Naive thymus-derived CD4-positive, alpha-beta T cell (primary cell): ENCODE measurements at regions of chr6 and their contacts with region 1.

Region 1: GRCh38 chr6:119349323-119350042 is at the start of gene MAN1A1:
- DNase-seq: peak; percentile 79 to 96 (median 90)
- ATAC-seq: peak; percentile 94
- H3K4me3 ChIP-seq: peak within 1 kb of the TSS; percentile 85
- H3K4me3 Mint-ChIP-seq: peak within 1 kb of the TSS; percentile 82 to 99 (median 93)
- H3K27ac ChIP-seq: peak within 1 kb of the TSS; percentile 83
- H3K27ac Mint-ChIP-seq: peak within 1 kb of the TSS; percentile 77 to 96 (median 83)
- H3K4me1 ChIP-seq: peaks cover 9% of the 10 kb centered on the region in 2 donors
- H3K4me1 Mint-ChIP-seq: peaks cover 8 to 60% (median 53%) of the 10 kb centered on the region in 7 donors
- H3K27me3 ChIP-seq: no peaks in the 10 kb centered on the region
- H3K27me3 Mint-ChIP-seq: no peaks in the 10 kb centered on the region
- total RNA-seq, gene MAN1A1: 8.3 to 22.3 (median 8.5) TPM

Region 2: DNA sequence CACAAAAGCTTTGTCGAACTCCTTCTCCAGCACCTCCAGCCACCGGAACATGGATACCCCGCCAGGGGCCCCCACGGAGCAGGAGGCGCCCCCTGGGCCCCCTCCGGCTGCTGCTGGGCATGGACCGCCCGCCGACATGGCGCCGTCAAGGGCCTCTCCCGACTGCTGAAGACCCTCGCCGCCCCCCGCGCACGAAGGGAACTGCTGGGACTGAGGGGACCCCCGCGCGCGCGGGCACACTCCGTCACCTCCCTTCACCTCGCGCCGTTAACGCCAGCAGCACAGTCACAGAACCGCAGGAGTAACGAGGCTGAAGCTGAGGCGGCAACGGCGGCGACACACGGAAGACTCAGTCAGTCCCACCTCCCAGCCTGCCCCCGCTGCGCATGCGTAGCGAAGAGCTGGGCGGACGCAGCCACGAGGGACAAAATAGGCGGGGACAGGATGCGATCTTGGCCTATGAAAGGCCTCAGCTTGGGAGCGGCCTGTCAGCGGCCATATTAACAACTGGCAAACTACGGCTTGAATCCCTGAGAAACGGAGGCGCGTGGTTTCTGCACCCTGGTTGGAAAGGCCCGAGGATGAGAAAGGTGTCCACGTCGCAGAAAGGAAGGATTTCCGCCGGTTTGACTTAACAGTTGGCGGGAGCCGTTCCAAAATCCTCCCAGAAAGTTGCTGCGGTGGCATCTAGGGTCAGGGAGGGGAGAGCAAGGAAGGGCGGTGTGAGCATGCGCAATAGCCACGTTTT is 1747.2 kb before region 1 on chr6 and contains the start of gene GOPC:
- CTCF ChIA-PET with region 1: no interaction called
- POLR2A ChIA-PET with region 1: no interaction called
- intact Hi-C with region 1: loop called in 1 of 2 experiments (anchors 1 kb)
- DNase-seq: peak; percentile 87 to 97 (median 96)
- ATAC-seq: peak; percentile 97
- H3K4me3 ChIP-seq: peak within 1 kb of the TSS; percentile 93
- H3K4me3 Mint-ChIP-seq: peak within 1 kb of the TSS; percentile 96 to 100 (median 99)
- H3K27ac ChIP-seq: peak within 1 kb of the TSS; percentile 92
- H3K27ac Mint-ChIP-seq: peak within 1 kb of the TSS; percentile 94 to 99 (median 99)
- H3K4me1 ChIP-seq: peaks cover 0 to 9% of the 10 kb centered on the region in 2 donors
- H3K4me1 Mint-ChIP-seq: peaks cover 24 to 58% (median 49%) of the 10 kb centered on the region in 7 donors
- H3K27me3 ChIP-seq: no peaks in the 10 kb centered on the region
- H3K27me3 Mint-ChIP-seq: peaks cover 0 to 5% (median 4%) of the 10 kb centered on the region in 5 donors
- total RNA-seq, gene GOPC: 16.2 to 39.4 (median 26.5) TPM

Region 3: GRCh38 chr6:118709859-118710350 is 639.6 kb before region 1 on chr6:
- CTCF ChIA-PET with region 1: no interaction called
- POLR2A ChIA-PET with region 1: no interaction called
- intact Hi-C with region 1: loop called (anchors 5 kb)
- DNase-seq: peak; percentile 25 to 87 (median 83)
- ATAC-seq: peak; percentile 93
- H3K4me3 ChIP-seq: peak overlapping the region; percentile 91
- H3K4me3 Mint-ChIP-seq: peak overlapping the region; percentile 95 to 100 (median 97)
- H3K27ac ChIP-seq: peak overlapping the region; percentile 76
- H3K27ac Mint-ChIP-seq: peak overlapping the region; percentile 94 to 99 (median 97)
- H3K4me1 ChIP-seq: peaks cover 48 to 49% of the 10 kb centered on the region in 2 donors
- H3K4me1 Mint-ChIP-seq: peaks cover 47 to 81% (median 74%) of the 10 kb centered on the region in 7 donors
- H3K27me3 ChIP-seq: no peaks in the 10 kb centered on the region
- H3K27me3 Mint-ChIP-seq: no peaks in the 10 kb centered on the region

Region 4: GRCh38 chr6:118968416-118968815 is 381.1 kb before region 1 on chr6:
- CTCF ChIA-PET with region 1: no interaction called
- POLR2A ChIA-PET with region 1: no interaction called
- intact Hi-C with region 1: loop called in 1 of 2 experiments (anchors 10 kb)
- DNase-seq: peak in 6 of 9 donors; percentile 8 to 35 (median 24)
- ATAC-seq: no peak
- H3K4me3 ChIP-seq: no peak overlapping the region
- H3K4me3 Mint-ChIP-seq: no peak overlapping the region
- H3K27ac ChIP-seq: no peak overlapping the region
- H3K27ac Mint-ChIP-seq: no peak overlapping the region
- H3K4me1 ChIP-seq: no peaks in the 10 kb centered on the region
- H3K4me1 Mint-ChIP-seq: peaks cover 0 to 4% (median 0%) of the 10 kb centered on the region in 7 donors
- H3K27me3 ChIP-seq: no peaks in the 10 kb centered on the region
- H3K27me3 Mint-ChIP-seq: no peaks in the 10 kb centered on the region

Region 5: DNA sequence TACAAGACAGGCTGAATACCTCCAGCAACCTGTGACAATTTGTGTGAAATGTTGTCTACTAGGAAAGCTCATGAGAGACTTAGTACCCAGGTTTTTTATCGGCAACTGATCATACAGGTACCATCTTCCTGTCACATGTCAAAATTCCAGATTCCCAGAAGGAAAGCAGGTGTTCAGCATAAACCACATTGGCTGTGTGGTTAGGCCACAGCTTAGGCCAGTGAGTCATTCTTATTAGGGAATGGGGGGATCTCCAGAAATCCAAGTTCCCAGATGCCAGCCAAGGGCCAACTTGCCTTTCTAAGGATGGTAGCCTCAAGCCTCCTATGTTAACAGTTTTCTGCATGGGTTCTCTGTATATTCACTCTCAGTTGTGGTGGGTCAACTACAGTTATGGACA is 337.0 kb before region 1 on chr6:
- CTCF ChIA-PET with region 1: no interaction called
- POLR2A ChIA-PET with region 1: no interaction called
- intact Hi-C with region 1: no loop called
- DNase-seq: no peak
- ATAC-seq: no peak
- H3K4me3 ChIP-seq: no peak overlapping the region
- H3K4me3 Mint-ChIP-seq: no peak overlapping the region
- H3K27ac ChIP-seq: no peak overlapping the region
- H3K27ac Mint-ChIP-seq: no peak overlapping the region
- H3K4me1 ChIP-seq: no peaks in the 10 kb centered on the region
- H3K4me1 Mint-ChIP-seq: peaks cover 0 to 1% (median 0%) of the 10 kb centered on the region in 7 donors
- H3K27me3 ChIP-seq: no peaks in the 10 kb centered on the region
- H3K27me3 Mint-ChIP-seq: no peaks in the 10 kb centered on the region

Region 6: GRCh38 chr6:119313937-119314884 is 35.3 kb before region 1 on chr6:
- CTCF ChIA-PET with region 1: interaction called, 6 read pairs
- POLR2A ChIA-PET with region 1: interaction called, 6 read pairs
- intact Hi-C with region 1: loop called (anchors 1 to 2 kb)
- DNase-seq: peak in 7 of 9 donors; percentile 17 to 49 (median 38)
- ATAC-seq: peak; percentile 72
- H3K4me3 ChIP-seq: peak overlapping the region; percentile 22
- H3K4me3 Mint-ChIP-seq: peak overlapping the region; percentile 57 to 83 (median 73)
- H3K27ac ChIP-seq: peak overlapping the region; percentile 40
- H3K27ac Mint-ChIP-seq: peak overlapping the region; percentile 68 to 97 (median 85)
- H3K4me1 ChIP-seq: peaks cover 27 to 43% of the 10 kb centered on the region in 2 donors
- H3K4me1 Mint-ChIP-seq: peaks cover 27 to 69% (median 39%) of the 10 kb centered on the region in 7 donors
- H3K27me3 ChIP-seq: no peaks in the 10 kb centered on the region
- H3K27me3 Mint-ChIP-seq: no peaks in the 10 kb centered on the region

Region 7: GRCh38 chr6:119379809-119380208 is 30.3 kb after region 1 on chr6:
- CTCF ChIA-PET with region 1: no interaction called
- POLR2A ChIA-PET with region 1: no interaction called
- intact Hi-C with region 1: no loop called
- DNase-seq: no peak
- ATAC-seq: no peak
- H3K4me3 ChIP-seq: no peak overlapping the region
- H3K4me3 Mint-ChIP-seq: no peak overlapping the region
- H3K27ac ChIP-seq: no peak overlapping the region
- H3K27ac Mint-ChIP-seq: no peak overlapping the region
- H3K4me1 ChIP-seq: no peaks in the 10 kb centered on the region
- H3K4me1 Mint-ChIP-seq: no peaks in the 10 kb centered on the region
- H3K27me3 ChIP-seq: no peaks in the 10 kb centered on the region
- H3K27me3 Mint-ChIP-seq: peaks cover 0 to 3% (median 0%) of the 10 kb centered on the region in 5 donors

Region 8: DNA sequence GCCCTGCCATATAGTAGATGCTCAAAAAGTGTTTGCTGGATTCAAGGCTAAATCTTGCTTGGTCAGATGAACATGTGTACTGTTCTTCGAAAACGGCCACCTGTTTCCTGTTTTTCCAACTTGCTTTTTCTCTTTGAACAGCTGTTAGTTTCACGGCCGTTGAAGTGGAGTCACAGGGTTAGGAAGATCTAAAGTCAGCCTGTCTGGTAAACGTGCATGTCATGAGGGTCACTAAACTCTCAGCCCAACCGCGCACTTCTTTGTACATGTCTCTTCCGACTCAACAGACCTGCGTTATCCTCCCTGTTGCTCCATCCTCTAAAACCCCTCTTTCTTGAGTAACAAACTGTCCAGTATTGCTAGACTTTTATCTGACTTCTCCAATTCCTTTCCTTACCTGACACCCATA is 93.3 kb after region 1 on chr6:
- CTCF ChIA-PET with region 1: no interaction called
- POLR2A ChIA-PET with region 1: no interaction called
- intact Hi-C with region 1: no loop called
- DNase-seq: no peak
- ATAC-seq: peak; percentile 54
- H3K4me3 ChIP-seq: no peak overlapping the region
- H3K4me3 Mint-ChIP-seq: peak overlapping the region in 1 of 10 donors; percentile 59
- H3K27ac ChIP-seq: no peak overlapping the region
- H3K27ac Mint-ChIP-seq: peak overlapping the region in 1 of 9 donors; percentile 61
- H3K4me1 ChIP-seq: no peaks in the 10 kb centered on the region
- H3K4me1 Mint-ChIP-seq: peaks cover 0 to 41% (median 0%) of the 10 kb centered on the region in 7 donors
- H3K27me3 ChIP-seq: no peaks in the 10 kb centered on the region
- H3K27me3 Mint-ChIP-seq: peaks cover 0 to 6% (median 0%) of the 10 kb centered on the region in 5 donors

Region 9: GRCh38 chr6:119470893-119471542 is 121.5 kb after region 1 on chr6:
- CTCF ChIA-PET with region 1: no interaction called
- POLR2A ChIA-PET with region 1: no interaction called
- intact Hi-C with region 1: loop called in 1 of 2 experiments (anchors 2 kb)
- DNase-seq: no peak
- ATAC-seq: no peak
- H3K4me3 ChIP-seq: no peak overlapping the region
- H3K4me3 Mint-ChIP-seq: peak overlapping the region in 1 of 10 donors; percentile 48
- H3K27ac ChIP-seq: no peak overlapping the region
- H3K27ac Mint-ChIP-seq: peak overlapping the region in 1 of 9 donors; percentile 30
- H3K4me1 ChIP-seq: no peaks in the 10 kb centered on the region
- H3K4me1 Mint-ChIP-seq: peaks cover 0 to 31% (median 4%) of the 10 kb centered on the region in 7 donors
- H3K27me3 ChIP-seq: no peaks in the 10 kb centered on the region
- H3K27me3 Mint-ChIP-seq: peaks cover 0 to 26% (median 0%) of the 10 kb centered on the region in 5 donors

Region 10: GRCh38 chr6:120056085-120056484 is 706.6 kb after region 1 on chr6:
- CTCF ChIA-PET with region 1: no interaction called
- POLR2A ChIA-PET with region 1: no interaction called
- intact Hi-C with region 1: loop called in 1 of 2 experiments (anchors 10 kb)
- DNase-seq: no peak
- ATAC-seq: no peak
- H3K4me3 ChIP-seq: no peak overlapping the region
- H3K4me3 Mint-ChIP-seq: no peak overlapping the region
- H3K27ac ChIP-seq: no peak overlapping the region
- H3K27ac Mint-ChIP-seq: no peak overlapping the region
- H3K4me1 ChIP-seq: no peaks in the 10 kb centered on the region
- H3K4me1 Mint-ChIP-seq: no peaks in the 10 kb centered on the region
- H3K27me3 ChIP-seq: no peaks in the 10 kb centered on the region
- H3K27me3 Mint-ChIP-seq: peaks cover 0 to 5% (median 0%) of the 10 kb centered on the region in 5 donors